Ascending aorta (tissue), 2 donors: ENCODE measurements at regions of chr11 and their contacts with region 1.

Region 1: GRCh38 chr11:102047305-102047924 is at the start of gene CFAP300:
- DNase-seq: peak; percentile 67 to 95
- H3K4me3 ChIP-seq: peak within 1 kb of the TSS; percentile 59 to 78
- H3K27ac ChIP-seq: peak within 1 kb of the TSS; percentile 81 to 90
- H3K4me1 ChIP-seq: peaks cover 0 to 4% of the 10 kb centered on the region in 2 donors
- H3K27me3 ChIP-seq: no peaks in the 10 kb centered on the region
- CTCF ChIP-seq: no peak
- total RNA-seq, gene CFAP300: not detected

Region 2: DNA sequence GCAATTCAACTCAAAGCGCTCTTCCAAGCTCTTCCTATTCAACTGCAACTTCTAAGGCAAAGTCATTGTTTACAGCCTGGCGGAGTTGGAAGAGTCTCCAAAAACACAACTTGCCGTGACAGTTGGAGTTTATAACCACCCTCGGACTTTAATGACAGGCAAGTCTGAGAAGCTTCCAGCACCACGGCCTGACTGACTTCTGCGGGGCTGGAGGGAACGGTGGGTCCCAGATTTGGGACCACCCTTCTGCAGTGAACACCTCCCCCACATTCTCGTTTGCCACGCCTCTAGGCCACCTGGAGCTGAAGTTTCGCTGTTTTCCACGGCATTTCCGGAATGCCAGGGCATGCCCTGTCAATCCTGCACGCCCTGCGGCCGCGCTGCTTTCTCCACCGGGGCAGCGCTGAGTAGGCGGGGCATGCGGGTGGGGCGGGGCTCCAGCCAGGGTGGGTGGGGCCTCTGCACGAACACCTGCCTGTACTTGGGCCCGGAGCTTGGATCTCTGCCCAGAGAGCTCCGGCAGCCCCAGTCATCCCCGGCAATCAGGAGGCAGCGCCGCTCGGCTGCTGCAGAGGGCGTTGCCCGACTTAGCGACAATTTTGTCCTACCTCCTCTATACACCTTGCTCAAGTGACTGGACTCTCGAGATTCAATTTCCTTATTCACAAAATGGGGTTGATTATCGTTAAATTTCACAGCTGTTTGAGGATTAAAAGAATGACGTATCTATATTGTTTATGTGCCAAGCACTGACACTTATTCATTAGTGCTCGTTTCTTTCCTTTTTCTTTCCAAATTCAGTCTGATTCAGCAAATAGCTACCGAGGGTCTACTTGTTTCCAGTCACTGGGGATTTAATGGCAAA is 221.1 kb after region 1 on chr11:
- intact Hi-C with region 1: loop called (anchors 5 kb)
- DNase-seq: peak; percentile 37 to 88
- H3K4me3 ChIP-seq: peak overlapping the region; percentile 47 to 59
- H3K27ac ChIP-seq: peak overlapping the region; percentile 35 to 43
- H3K4me1 ChIP-seq: peaks cover 0 to 4% of the 10 kb centered on the region in 2 donors
- H3K27me3 ChIP-seq: no peaks in the 10 kb centered on the region
- CTCF ChIP-seq: peak; percentile 27 to 79 (median 47)

Region 3: DNA sequence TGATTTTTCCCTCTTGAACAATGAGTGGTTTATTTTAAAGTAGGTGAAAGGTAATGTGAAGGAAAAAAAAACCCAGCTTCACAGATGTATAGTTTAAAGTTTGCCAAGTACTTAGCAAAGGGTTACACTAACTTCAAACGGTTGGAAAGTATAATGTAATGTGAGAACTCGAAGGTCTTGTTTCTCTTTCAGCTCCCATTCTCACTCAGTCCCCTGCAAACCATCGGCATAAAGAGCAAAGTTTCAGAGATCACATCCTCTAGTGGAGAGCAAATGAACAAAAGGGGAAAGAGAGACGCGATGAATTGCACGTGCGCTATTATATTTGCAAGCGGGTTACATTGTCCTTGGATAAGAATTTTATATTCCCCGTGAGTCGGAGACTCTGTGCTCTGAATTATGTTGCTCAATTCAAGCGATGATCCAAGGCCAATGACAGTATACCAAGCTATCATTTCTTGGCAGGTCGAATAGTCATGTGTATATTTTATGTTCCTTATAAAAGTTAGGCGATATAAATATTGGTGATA is 232.3 kb after region 1 on chr11:
- intact Hi-C with region 1: loop called (anchors 5 kb)
- DNase-seq: no peak
- H3K4me3 ChIP-seq: peak overlapping the region; percentile 4 to 14
- H3K27ac ChIP-seq: no peak overlapping the region
- H3K4me1 ChIP-seq: peaks cover 2 to 15% of the 10 kb centered on the region in 2 donors
- H3K27me3 ChIP-seq: no peaks in the 10 kb centered on the region
- CTCF ChIP-seq: peak in 2 of 3 experiments; percentile 6 to 14

Region 4: DNA sequence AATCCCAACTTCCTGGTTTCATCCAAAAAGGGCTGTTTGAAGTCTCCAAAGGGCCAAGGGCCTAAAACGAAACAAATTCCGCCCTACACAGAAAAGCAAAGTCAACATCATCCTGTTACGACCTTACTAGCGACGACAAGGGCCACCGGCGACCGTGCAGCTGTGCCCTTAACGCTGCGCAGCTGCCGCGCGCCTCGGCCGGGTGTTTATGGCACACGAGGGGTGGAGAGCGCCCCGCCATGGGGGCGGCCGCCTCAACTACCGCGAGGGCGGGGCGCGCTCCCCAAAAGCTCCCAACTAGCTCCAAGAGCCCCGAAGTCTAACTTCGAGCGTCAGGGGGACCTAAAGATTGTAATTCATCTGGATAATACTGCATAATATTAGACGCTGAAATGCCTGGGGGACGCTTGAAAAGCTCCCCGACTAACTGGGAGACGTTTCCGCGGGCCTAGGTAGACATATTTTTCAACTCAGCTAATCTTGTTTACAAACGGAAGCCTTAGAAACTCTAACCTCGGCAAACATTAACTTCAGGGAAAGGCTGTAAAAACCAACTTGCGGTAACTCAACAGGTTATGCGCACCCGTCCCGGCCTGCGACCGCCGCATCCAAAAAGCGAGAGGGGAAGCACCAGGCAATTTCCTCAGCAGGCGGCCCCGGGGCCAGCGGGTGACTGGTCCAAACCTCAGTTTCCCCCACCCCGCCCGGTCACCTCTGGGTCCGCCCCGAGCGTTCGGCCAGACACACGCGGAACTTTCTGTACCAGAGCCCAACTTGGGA is 404.5 kb after region 1 on chr11:
- intact Hi-C with region 1: loop called (anchors 2 kb)
- DNase-seq: peak in 1 of 2 donors; percentile 73
- H3K4me3 ChIP-seq: peak overlapping the region; percentile 93 to 94
- H3K27ac ChIP-seq: peak overlapping the region; percentile 80 to 81
- H3K4me1 ChIP-seq: peaks cover 0 to 5% of the 10 kb centered on the region in 2 donors
- H3K27me3 ChIP-seq: no peaks in the 10 kb centered on the region
- CTCF ChIP-seq: peak in 1 of 3 experiments; percentile 28